PC-3 (cell line): ENCODE measurements at regions of chr14 and their contacts with region 1.

Region 1: DNA sequence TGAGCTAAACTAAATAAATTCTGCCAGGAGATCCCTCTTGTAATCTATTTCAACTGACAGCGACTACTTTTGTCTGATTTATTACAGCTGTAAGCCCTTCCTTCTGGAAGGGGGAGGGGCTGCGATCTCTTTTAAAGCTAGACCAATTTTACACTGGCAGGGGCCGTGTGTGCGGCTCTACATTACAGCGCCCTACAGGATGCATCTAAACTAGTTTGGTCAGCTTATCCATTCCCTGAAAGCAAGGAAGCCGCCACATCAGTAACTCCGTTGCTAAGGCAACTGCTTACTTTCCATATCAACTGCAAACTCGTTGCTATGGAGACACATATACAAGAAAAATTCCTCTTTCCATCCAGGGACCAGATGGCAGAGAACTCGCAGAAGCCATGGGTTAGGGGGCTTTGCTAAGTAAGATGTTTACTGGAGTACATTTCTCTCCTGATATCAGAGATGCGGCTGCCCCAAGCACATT is 17.4 kb downstream of the FOXN3 start:
- DNase-seq: no peak
- ATAC-seq: no peak
- H3K4me3 ChIP-seq: no peak overlapping the region
- H3K27ac ChIP-seq: no peak overlapping the region
- H3K4me1 ChIP-seq: no peaks in the 10 kb centered on the region
- H3K27me3 ChIP-seq: no peaks in the 10 kb centered on the region
- CTCF ChIP-seq: no peak

Region 2: GRCh38 chr14:89221109-89221810 is 178.4 kb before region 1 on chr14:
- CTCF ChIA-PET with region 1: no interaction called
- POLR2A ChIA-PET with region 1: interaction called, 25 read pairs
- intact Hi-C with region 1: no loop called
- DNase-seq: peak; percentile 20
- ATAC-seq: peak; percentile 81
- H3K4me3 ChIP-seq: no peak overlapping the region
- H3K27ac ChIP-seq: no peak overlapping the region
- H3K4me1 ChIP-seq: no peaks in the 10 kb centered on the region
- H3K27me3 ChIP-seq: no peaks in the 10 kb centered on the region
- CTCF ChIP-seq: no peak

Region 3: DNA sequence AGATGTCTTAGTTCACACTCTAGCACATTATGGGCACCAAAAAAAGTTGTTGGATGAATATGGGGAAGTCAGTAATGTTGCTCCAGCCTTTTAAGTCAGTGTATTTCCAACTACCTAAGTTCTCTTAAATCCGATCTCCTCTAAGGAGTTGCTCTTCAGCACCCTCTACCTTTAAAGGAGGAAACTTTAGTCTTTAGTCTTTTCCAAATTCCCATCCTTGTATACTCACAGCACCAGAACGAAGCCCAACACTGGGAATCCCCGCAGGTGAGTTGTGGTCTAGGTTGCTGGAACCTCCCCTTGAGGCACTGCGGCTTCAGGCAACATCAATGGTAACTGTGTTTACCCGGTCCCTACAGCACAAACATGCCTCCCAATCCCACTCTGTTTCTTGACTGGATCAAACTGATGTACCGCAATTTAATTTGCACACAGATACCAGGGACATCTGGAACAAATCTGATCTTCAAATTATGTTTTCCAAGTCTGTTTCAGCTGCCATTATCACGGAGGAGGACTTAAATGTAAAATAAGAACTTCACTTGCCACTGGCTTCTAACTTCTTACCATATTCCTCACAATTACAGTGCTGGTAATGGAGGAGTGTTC is 161.6 kb before region 1 on chr14:
- CTCF ChIA-PET with region 1: no interaction called
- POLR2A ChIA-PET with region 1: no interaction called
- intact Hi-C with region 1: no loop called
- DNase-seq: peak; percentile 52
- ATAC-seq: peak; percentile 72
- H3K4me3 ChIP-seq: no peak overlapping the region
- H3K27ac ChIP-seq: no peak overlapping the region
- H3K4me1 ChIP-seq: peaks cover 4% of the 10 kb centered on the region; the same call in 1 of the 2 replicates
- H3K27me3 ChIP-seq: no peaks in the 10 kb centered on the region
- CTCF ChIP-seq: peak; percentile 65